Activated CD8-positive, alpha-beta T cell treated with anti-CD3 and anti-CD28 coated beads, Interleukin-2, amount 10 ng/mL, durations not matched to agents 7 days and 5 days (primary cell): ENCODE measurements at regions of chr10 and their contacts with region 1.

Region 1: GRCh38 chr10:17409170-17409733 is 45.1 kb downstream of the ST8SIA6 start:
- DNase-seq: peak; percentile 24
- ATAC-seq: peak; percentile 39
- H3K4me3 Mint-ChIP-seq: no peak overlapping the region
- H3K27ac Mint-ChIP-seq: no peak overlapping the region
- H3K4me1 Mint-ChIP-seq: peaks cover 8% of the 10 kb centered on the region
- H3K27me3 Mint-ChIP-seq: peaks cover 7% of the 10 kb centered on the region

Region 2: GRCh38 chr10:17425584-17426262 is 16.5 kb after region 1 on chr10:
- CTCF ChIA-PET with region 1: interaction called, 123 read pairs
- POLR2A ChIA-PET with region 1: no interaction called
- DNase-seq: peak; percentile 55
- ATAC-seq: peak; percentile 32
- H3K4me3 Mint-ChIP-seq: peak overlapping the region; percentile 4
- H3K27ac Mint-ChIP-seq: peak overlapping the region; percentile 86
- H3K4me1 Mint-ChIP-seq: peaks cover 67% of the 10 kb centered on the region
- H3K27me3 Mint-ChIP-seq: peaks cover 3% of the 10 kb centered on the region